T-cell (primary cell): ENCODE measurements at regions of chr16 and their contacts with region 1.

Region 1: DNA sequence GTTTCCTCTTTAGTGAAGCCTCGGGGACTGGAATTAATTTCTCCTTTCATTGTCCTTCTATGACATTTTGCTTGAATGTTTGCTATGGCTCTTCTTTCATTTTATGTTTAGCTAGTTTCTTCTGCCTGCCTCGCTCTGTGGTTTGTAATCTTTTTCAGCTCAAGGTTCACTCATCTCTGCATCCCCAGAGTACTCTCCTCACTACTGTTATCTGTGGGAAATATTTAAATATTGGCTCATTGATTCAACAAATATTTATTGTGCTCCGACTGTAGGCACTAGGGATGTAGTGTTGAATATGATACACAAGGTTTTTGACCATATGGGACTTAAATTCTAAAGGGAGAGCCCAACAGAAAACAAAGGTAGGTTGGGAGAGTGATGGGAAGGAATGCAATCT is 195.9 kb downstream of the PHKB start:
- DNase-seq: no peak
- ATAC-seq: no peak
- H3K4me3 ChIP-seq: no peak overlapping the region
- H3K4me3 Mint-ChIP-seq: no peak overlapping the region
- H3K27ac ChIP-seq: no peak overlapping the region
- H3K27ac Mint-ChIP-seq: no peak overlapping the region
- H3K4me1 ChIP-seq: no peaks in the 10 kb centered on the region
- H3K4me1 Mint-ChIP-seq: no peaks in the 10 kb centered on the region
- H3K27me3 ChIP-seq: no peaks in the 10 kb centered on the region
- H3K27me3 Mint-ChIP-seq: no peaks in the 10 kb centered on the region

Region 2: DNA sequence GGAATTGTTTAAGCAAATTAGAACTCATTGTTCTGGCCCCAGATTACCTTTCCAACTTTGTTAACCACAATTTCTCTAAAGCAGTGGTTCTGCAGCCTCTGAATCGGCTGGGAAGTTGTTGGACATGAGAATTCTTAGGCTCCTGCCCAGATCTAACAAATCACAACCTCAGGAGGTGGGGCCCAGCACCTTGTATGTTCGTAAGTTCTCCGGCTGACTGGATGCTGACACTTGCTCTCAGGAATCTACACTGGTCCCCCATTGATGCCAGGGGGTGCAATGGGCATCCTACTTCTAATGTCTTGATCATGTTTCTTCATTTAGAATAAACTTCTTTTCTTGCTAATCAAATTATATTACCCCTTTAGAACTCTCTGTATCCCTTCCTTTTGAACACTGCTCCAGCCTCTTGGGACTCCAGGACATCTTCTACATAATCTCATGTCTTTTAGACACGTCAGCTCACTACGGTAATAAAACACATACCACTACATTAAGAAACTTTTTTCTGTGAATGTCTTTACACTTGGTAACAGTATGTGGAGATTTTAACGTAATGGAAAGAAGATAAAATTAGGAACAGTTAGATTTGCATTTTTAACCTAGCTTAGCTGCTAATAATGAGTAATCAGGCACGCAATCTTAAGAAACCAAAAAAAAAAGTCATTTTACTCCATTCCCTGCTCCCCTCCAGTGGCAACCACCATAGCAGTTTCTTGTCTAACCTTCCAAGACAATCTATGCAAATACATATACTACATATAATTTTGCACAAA is 339.4 kb before region 1 on chr16:
- CTCF ChIA-PET with region 1: no interaction called
- POLR2A ChIA-PET with region 1: interaction called in 1 of 2 experiments, 10 read pairs
- DNase-seq: no peak
- ATAC-seq: no peak
- H3K4me3 ChIP-seq: no peak overlapping the region
- H3K4me3 Mint-ChIP-seq: no peak overlapping the region
- H3K27ac ChIP-seq: no peak overlapping the region
- H3K27ac Mint-ChIP-seq: no peak overlapping the region
- H3K4me1 ChIP-seq: no peaks in the 10 kb centered on the region
- H3K4me1 Mint-ChIP-seq: no peaks in the 10 kb centered on the region
- H3K27me3 ChIP-seq: no peaks in the 10 kb centered on the region
- H3K27me3 Mint-ChIP-seq: no peaks in the 10 kb centered on the region